CD8-positive, alpha-beta T cell (primary cell): ENCODE measurements at regions of chrX and their contacts with region 1.

Region 1: GRCh38 chrX:154748712-154749343 is 2.0 kb downstream of the GAB3 start:
- DNase-seq: peak in 7 of 9 experiments; percentile 21 to 83 (median 57)
- ATAC-seq: peak; percentile 71
- H3K4me3 ChIP-seq: peak overlapping the region in 1 of 2 experiments; percentile 75
- H3K4me3 Mint-ChIP-seq: peak overlapping the region; percentile 54
- H3K27ac ChIP-seq: peak overlapping the region in 1 of 2 experiments; percentile 40
- H3K27ac Mint-ChIP-seq: peak overlapping the region; percentile 64
- H3K4me1 ChIP-seq: peaks cover 16% of the 10 kb centered on the region
- H3K4me1 Mint-ChIP-seq: peaks cover 41% of the 10 kb centered on the region
- H3K27me3 ChIP-seq: no peaks in the 10 kb centered on the region
- H3K27me3 Mint-ChIP-seq: no peaks in the 10 kb centered on the region
- CTCF ChIP-seq: peak; percentile 64

Region 2: DNA sequence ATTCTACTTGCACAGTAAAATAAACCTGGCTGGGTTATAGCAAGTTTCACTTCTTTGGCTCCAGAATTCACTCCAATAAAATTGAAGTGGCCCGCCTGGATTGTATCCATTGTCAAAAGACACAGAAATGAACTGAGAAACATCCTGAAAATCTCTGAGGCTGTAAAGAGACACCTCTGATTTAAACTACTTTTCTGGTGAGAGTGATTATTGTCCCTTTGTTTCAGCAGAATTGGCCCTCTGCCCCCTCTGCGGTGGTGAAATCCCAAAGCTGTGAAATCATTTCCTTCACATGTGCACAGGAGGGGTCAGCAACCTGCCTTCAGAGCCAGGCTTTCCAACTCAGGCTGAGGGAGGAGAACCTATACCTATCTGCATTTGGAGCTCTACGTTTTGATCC is 21.0 kb before region 1 on chrX:
- CTCF ChIA-PET with region 1: interaction called, 110 read pairs
- POLR2A ChIA-PET with region 1: interaction called, 13 read pairs
- intact Hi-C with region 1: loop called (anchors 1 to 2 kb)
- DNase-seq: no peak
- ATAC-seq: no peak
- H3K4me3 ChIP-seq: no peak overlapping the region
- H3K4me3 Mint-ChIP-seq: no peak overlapping the region
- H3K27ac ChIP-seq: peak overlapping the region in 1 of 2 experiments; percentile 60
- H3K27ac Mint-ChIP-seq: peak overlapping the region; percentile 45
- H3K4me1 ChIP-seq: peaks cover 53% of the 10 kb centered on the region
- H3K4me1 Mint-ChIP-seq: peaks cover 94% of the 10 kb centered on the region
- H3K27me3 ChIP-seq: no peaks in the 10 kb centered on the region
- H3K27me3 Mint-ChIP-seq: no peaks in the 10 kb centered on the region
- CTCF ChIP-seq: no peak

Region 3: DNA sequence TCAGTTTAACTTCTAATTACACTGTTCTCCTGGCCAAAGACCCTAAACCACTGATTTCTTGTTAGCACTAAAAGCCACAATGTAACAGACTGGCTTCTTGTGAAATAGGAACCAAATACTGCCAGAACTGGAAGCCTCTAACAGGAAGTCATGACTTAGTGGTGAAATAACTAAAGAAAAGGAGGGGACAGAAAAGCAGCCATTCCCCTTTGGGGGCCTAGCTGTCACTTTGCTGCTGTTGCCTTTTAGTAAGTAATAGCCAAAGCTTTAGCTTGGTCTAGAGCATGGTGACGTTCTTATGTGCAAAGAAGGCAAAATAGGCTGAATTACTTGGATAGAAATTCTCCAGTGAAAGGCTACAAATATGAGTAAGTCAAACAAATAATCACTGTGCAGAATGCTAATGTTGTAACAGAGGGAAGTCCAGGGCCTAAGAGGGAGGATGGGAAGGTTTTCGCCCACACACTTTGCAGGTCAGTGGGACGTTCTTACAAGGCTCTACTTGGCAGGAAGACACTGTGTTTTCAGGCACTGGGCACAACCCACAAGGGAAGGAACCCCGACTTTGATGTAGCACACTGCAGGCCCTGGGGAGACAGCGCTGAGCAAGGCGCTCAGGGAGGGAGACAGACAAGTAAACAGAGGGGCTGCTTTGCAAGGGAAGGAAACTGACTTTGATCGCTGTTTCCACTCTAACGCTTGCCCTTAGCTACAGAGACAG is 14.6 kb before region 1 on chrX:
- CTCF ChIA-PET with region 1: interaction called, 110 read pairs
- POLR2A ChIA-PET with region 1: interaction called, 13 read pairs
- intact Hi-C with region 1: loop called in 1 of 2 experiments (anchors 2 kb)
- DNase-seq: peak in 6 of 9 experiments; percentile 49 to 79 (median 63)
- ATAC-seq: peak; percentile 63
- H3K4me3 ChIP-seq: peak overlapping the region; percentile 24 to 44
- H3K4me3 Mint-ChIP-seq: peak overlapping the region; percentile 65
- H3K27ac ChIP-seq: peak overlapping the region; percentile 56 to 84
- H3K27ac Mint-ChIP-seq: peak overlapping the region; percentile 97
- H3K4me1 ChIP-seq: peaks cover 97% of the 10 kb centered on the region
- H3K4me1 Mint-ChIP-seq: peaks cover 92% of the 10 kb centered on the region
- H3K27me3 ChIP-seq: no peaks in the 10 kb centered on the region
- H3K27me3 Mint-ChIP-seq: no peaks in the 10 kb centered on the region
- CTCF ChIP-seq: no peak

Region 4: DNA sequence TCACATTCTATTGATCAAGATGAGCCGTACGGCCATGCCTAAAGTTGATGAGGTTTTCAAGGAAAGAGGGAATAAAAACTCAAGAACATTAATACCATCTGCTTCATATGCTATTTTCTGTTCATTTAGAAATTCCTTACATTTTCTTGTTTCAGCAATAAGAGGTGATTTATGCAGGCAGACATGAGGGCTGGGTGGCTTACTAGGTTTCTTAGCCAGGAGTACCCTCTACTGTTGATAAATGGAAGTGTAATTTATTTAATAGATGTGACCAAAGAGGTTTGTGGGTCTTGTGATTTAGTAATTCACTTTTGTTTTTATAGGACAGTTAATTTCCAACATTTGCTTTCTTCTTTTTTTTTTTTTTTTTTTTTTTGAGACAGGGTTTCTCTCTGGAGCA is 92.0 kb after region 1 on chrX:
- CTCF ChIA-PET with region 1: interaction called, 5 read pairs
- POLR2A ChIA-PET with region 1: no interaction called
- intact Hi-C with region 1: loop called (anchors 2 kb)
- DNase-seq: peak in 3 of 9 experiments; percentile 16 to 65 (median 53)
- ATAC-seq: peak; percentile 66
- H3K4me3 ChIP-seq: no peak overlapping the region
- H3K4me3 Mint-ChIP-seq: no peak overlapping the region
- H3K27ac ChIP-seq: no peak overlapping the region
- H3K27ac Mint-ChIP-seq: no peak overlapping the region
- H3K4me1 ChIP-seq: no peaks in the 10 kb centered on the region
- H3K4me1 Mint-ChIP-seq: no peaks in the 10 kb centered on the region
- H3K27me3 ChIP-seq: no peaks in the 10 kb centered on the region
- H3K27me3 Mint-ChIP-seq: no peaks in the 10 kb centered on the region
- CTCF ChIP-seq: peak; percentile 58

Region 5: GRCh38 chrX:154873329-154873728 is 124.5 kb after region 1 on chrX:
- CTCF ChIA-PET with region 1: no interaction called
- POLR2A ChIA-PET with region 1: no interaction called
- intact Hi-C with region 1: no loop called
- DNase-seq: no peak
- ATAC-seq: no peak
- H3K4me3 ChIP-seq: no peak overlapping the region
- H3K4me3 Mint-ChIP-seq: no peak overlapping the region
- H3K27ac ChIP-seq: no peak overlapping the region
- H3K27ac Mint-ChIP-seq: no peak overlapping the region
- H3K4me1 ChIP-seq: no peaks in the 10 kb centered on the region
- H3K4me1 Mint-ChIP-seq: no peaks in the 10 kb centered on the region
- H3K27me3 ChIP-seq: no peaks in the 10 kb centered on the region
- H3K27me3 Mint-ChIP-seq: no peaks in the 10 kb centered on the region
- CTCF ChIP-seq: no peak